Spleen (tissue), 13 donors: ENCODE measurements at regions of chr1 and their contacts with region 1.

Region 1: GRCh38 chr1:203486618-203487370 is 7.2 kb upstream of the OPTC start:
- DNase-seq: no peak
- H3K4me3 ChIP-seq: peak overlapping the region in 3 of 8 donors; percentile 39 to 67 (median 46)
- H3K27ac ChIP-seq: peak overlapping the region in 7 of 8 donors; percentile 57 to 65 (median 60)
- H3K4me1 ChIP-seq: peaks cover 8 to 54% (median 14%) of the 10 kb centered on the region in 6 donors
- H3K27me3 ChIP-seq: peaks cover 0 to 14% (median 0%) of the 10 kb centered on the region in 7 donors
- CTCF ChIP-seq: no peak
- POLR2A ChIP-seq: no peak

Region 2: GRCh38 chr1:203267347-203267846 is 219.4 kb before region 1 on chr1:
- intact Hi-C with region 1: loop called (anchors 5 kb)
- DNase-seq: peak; percentile 90
- H3K4me3 ChIP-seq: peak overlapping the region; percentile 23 to 69 (median 44)
- H3K27ac ChIP-seq: peak overlapping the region; percentile 64 to 86 (median 80)
- H3K4me1 ChIP-seq: peaks cover 18 to 69% (median 36%) of the 10 kb centered on the region in 6 donors
- H3K27me3 ChIP-seq: peaks cover 0 to 6% (median 0%) of the 10 kb centered on the region in 7 donors
- CTCF ChIP-seq: peak; percentile 91 to 97 (median 94)
- POLR2A ChIP-seq: no peak